ENCODE measurements at regions of chr1 and their contacts with region 1.

Region 1: DNA sequence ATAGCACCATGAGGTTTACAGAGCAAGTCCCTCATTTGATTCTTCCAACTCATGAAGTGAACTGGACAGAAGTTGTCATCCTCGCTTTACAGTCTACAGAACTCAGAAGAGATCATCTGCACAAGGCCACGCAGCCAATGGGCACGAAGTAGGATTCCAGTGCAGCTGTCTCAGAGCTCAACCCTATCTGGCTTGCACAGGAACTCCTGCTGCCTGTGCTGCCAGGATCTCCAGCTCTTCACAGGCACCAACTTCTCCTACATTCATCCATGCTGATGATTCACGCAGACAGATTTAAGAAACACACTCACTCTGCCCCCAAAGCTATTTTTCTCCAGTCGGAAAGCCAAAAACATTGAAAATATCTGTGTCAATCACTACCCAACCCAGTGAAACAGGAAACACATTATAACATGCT is 157.0 kb downstream of the RERE start:
- DNase-seq: peak; percentile 43
- ATAC-seq: peak; percentile 22
- H3K4me3 ChIP-seq: peak overlapping the region in 2 of 5 experiments; percentile 22 to 46
- H3K4me3 Mint-ChIP-seq: no peak overlapping the region
- H3K27ac ChIP-seq: peak overlapping the region; percentile 66 to 69
- H3K27ac Mint-ChIP-seq: no peak overlapping the region
- H3K4me1 ChIP-seq: peaks cover 70 to 76% of the 10 kb centered on the region in 2 donors
- H3K4me1 Mint-ChIP-seq: peaks cover 32% of the 10 kb centered on the region
- H3K27me3 ChIP-seq: no peaks in the 10 kb centered on the region
- H3K27me3 Mint-ChIP-seq: no peaks in the 10 kb centered on the region
- CTCF ChIP-seq: no peak

Region 2: DNA sequence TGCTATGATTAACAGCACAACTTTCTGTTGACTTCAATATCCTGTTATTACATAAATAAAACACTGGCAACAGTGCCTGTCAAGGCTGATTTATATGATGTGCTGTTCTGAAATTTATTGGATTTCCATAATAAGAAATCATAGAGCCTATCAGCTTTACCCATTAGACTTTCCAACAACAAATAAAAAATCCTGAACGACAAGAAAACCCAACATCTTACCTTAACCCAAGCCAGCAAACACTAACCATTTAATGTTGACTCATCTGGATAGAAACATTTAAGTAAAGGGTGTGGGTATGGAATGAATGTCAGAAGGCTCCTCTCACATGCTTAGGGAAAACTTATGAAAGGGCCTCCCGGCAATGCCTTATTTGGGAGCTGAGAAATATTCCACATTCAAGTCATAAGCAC is 177.4 kb before region 1 on chr1:
- CTCF ChIA-PET with region 1: no interaction called
- POLR2A ChIA-PET with region 1: no interaction called
- intact Hi-C with region 1: no loop called
- DNase-seq: no peak
- ATAC-seq: no peak
- H3K4me3 ChIP-seq: no peak overlapping the region
- H3K4me3 Mint-ChIP-seq: no peak overlapping the region
- H3K27ac ChIP-seq: no peak overlapping the region
- H3K27ac Mint-ChIP-seq: no peak overlapping the region
- H3K4me1 ChIP-seq: no peaks in the 10 kb centered on the region
- H3K4me1 Mint-ChIP-seq: peaks cover 10% of the 10 kb centered on the region
- H3K27me3 ChIP-seq: no peaks in the 10 kb centered on the region
- H3K27me3 Mint-ChIP-seq: no peaks in the 10 kb centered on the region
- CTCF ChIP-seq: no peak

Region 3: GRCh38 chr1:8643542-8644536 is 16.6 kb before region 1 on chr1:
- CTCF ChIA-PET with region 1: interaction called, 3 read pairs
- POLR2A ChIA-PET with region 1: interaction called, 3 read pairs
- intact Hi-C with region 1: loop called (anchors 2 kb)
- DNase-seq: peak; percentile 82
- ATAC-seq: peak; percentile 99
- H3K4me3 ChIP-seq: no peak overlapping the region
- H3K4me3 Mint-ChIP-seq: peak overlapping the region; percentile 54
- H3K27ac ChIP-seq: peak overlapping the region; percentile 65 to 78
- H3K27ac Mint-ChIP-seq: peak overlapping the region; percentile 84
- H3K4me1 ChIP-seq: peaks cover 36 to 40% of the 10 kb centered on the region in 2 donors
- H3K4me1 Mint-ChIP-seq: peaks cover 61% of the 10 kb centered on the region
- H3K27me3 ChIP-seq: no peaks in the 10 kb centered on the region
- H3K27me3 Mint-ChIP-seq: no peaks in the 10 kb centered on the region
- CTCF ChIP-seq: no peak

Region 4: DNA sequence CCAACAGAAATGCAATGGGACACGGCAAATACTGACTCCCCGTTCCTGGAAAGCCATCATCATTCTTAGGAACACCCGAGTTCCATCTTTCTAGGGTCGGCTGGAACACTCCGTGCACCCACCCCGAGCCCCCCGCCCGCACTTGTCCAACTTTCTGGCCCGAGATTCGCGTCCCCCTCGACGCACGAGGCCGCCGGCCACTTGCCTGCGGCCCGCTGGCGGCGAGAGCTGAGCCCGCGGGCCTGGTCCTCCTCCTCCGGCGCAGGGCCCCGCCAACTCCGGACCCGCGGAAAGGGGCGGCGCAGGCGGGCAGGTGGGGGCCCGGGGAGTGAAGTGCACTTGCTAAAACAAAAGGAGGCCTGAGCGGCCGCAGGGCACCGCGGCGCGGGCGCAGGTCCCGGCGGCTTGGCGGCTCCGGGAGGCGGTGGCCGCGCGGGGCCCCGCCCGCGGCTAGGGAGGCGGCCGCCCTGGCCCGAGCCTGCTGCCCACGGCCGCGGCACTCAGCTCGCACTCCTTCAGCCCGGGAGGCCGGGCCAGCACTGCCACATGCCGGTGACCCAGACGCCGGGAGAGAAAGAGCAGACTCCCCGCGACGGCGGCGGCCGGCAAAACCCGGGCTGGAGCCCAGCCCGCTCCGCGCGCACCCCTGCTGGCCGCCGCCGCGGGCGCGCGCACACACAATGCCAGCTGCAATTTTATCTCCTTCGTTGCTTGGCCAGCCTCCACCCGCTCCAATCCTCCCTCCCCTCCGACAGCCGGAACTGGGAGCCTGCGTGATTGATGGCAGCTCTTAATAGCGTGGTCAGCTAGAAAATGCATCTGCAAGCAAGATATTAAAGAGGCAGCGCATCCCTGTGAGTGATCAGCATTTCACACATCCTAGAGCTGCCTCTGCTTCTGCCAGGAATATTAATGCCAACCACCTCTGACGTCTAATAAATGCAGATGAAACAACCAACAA is 42.7 kb after region 1 on chr1:
- CTCF ChIA-PET with region 1: interaction called, 12 read pairs
- POLR2A ChIA-PET with region 1: no interaction called
- intact Hi-C with region 1: loop called (anchors 2 kb)
- DNase-seq: peak; percentile 88
- ATAC-seq: peak; percentile 72
- H3K4me3 ChIP-seq: peak overlapping the region; percentile 60 to 81 (median 63)
- H3K4me3 Mint-ChIP-seq: peak overlapping the region; percentile 93
- H3K27ac ChIP-seq: peak overlapping the region; percentile 54 to 77
- H3K27ac Mint-ChIP-seq: peak overlapping the region; percentile 93
- H3K4me1 ChIP-seq: peaks cover 32 to 39% of the 10 kb centered on the region in 2 donors
- H3K4me1 Mint-ChIP-seq: peaks cover 61% of the 10 kb centered on the region
- H3K27me3 ChIP-seq: no peaks in the 10 kb centered on the region
- H3K27me3 Mint-ChIP-seq: no peaks in the 10 kb centered on the region
- CTCF ChIP-seq: no peak